Common myeloid progenitor, CD34-positive (primary cell): ENCODE measurements at regions of chr1 and their contacts with region 1.

Region 1: DNA sequence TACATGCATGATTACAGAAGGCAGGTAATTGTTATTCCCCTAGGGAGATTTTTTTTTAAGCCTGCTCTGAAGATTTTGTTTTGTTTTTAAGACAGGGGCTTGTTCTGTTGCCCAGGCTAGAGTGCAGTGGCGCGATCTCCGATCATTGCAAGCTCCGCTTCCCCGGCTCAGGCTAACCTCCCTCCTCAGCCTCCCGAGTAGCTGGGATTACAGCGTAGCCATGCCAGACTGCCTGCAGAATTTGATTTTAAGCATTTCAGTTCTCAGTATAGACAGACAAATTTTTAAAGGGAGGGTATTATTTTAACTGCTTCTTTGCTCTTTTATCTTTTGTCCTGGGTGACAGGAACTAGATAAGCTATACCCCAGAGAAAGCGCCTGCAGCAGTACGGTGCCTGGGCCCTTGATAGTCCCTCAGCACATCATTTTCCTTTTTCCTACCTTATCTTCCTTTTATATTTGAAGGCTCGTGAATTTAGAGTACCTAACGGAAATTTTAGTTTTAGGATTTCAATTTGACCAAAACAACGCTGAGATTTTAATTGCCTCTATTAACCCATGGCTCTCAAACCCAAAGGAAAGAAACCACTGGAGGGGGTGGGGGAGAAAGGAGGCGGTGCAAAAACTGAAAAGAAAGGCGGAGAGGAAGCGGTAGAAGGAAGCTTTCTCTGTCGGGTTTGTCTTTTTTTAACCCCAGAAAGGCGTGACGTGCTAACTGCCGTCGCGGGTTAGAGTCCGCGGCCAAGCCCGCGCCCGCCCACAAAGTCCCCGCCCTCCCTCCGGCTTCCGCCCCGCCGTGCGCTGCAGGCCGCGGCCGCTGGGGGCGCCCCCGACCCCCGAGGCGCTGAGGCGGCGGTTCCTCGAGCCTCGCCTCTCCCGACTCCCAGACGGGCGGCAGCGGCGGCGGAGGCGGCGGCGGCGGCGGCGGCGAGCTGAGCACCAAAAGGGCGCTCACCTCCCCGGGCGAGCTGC is at the start of gene EEIG2:
- DNase-seq: peak; percentile 91 to 95 (median 94)
- H3K4me3 ChIP-seq: peak within 1 kb of the TSS; percentile 79 to 91 (median 86)
- H3K27ac ChIP-seq: peak within 1 kb of the TSS; percentile 8 to 75
- H3K4me1 ChIP-seq: peaks cover 14 to 38% (median 29%) of the 10 kb centered on the region in 4 experiments
- H3K27me3 ChIP-seq: no peaks in the 10 kb centered on the region

Region 2: DNA sequence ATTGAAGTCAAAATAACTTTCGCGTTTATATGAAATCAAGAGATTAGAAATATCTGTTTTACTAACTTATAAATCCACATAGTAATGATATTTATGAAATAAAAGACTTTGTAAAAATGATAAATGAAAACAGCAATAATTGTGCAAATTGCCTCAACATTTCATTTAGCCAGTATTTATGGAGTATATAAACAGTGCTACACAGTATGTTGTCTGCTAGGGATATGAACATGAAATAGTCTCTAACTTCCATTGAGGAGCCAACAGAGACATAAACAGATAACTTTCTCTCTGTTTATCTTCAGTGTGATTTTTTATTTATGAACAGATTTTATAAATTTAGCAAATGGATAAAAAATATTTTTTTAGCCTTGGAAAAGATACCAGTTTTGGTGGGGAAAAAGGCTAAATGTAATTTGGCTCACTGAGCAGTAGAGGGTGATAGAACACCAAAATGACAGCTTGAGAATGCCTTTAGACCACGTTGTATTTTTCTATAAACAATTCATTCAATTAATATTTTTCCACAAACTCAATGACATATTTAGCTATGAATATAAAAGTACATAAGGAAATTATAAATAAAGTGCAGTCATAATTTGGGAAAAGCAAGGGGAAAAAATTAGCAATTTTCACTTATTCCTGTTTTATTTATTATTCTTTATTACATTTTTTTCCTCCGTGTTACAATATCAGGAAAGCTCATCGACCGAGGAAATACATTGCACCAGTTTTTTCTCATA is 47.1 kb before region 1 on chr1:
- CTCF ChIA-PET with region 1: interaction called, 63 read pairs
- POLR2A ChIA-PET with region 1: no interaction called
- DNase-seq: peak; percentile 51 to 74 (median 62)
- H3K4me3 ChIP-seq: no peak overlapping the region
- H3K27ac ChIP-seq: no peak overlapping the region
- H3K4me1 ChIP-seq: no peaks in the 10 kb centered on the region
- H3K27me3 ChIP-seq: peaks cover 0 to 10% (median 5%) of the 10 kb centered on the region in 5 experiments

Region 3: GRCh38 chr1:108531444-108531843 is 28.1 kb before region 1 on chr1:
- CTCF ChIA-PET with region 1: interaction called, 23 read pairs
- POLR2A ChIA-PET with region 1: interaction called, 9 read pairs
- DNase-seq: no peak
- H3K4me3 ChIP-seq: no peak overlapping the region
- H3K27ac ChIP-seq: no peak overlapping the region
- H3K4me1 ChIP-seq: peaks cover 0 to 6% (median 3%) of the 10 kb centered on the region in 4 experiments
- H3K27me3 ChIP-seq: no peaks in the 10 kb centered on the region

Region 4: DNA sequence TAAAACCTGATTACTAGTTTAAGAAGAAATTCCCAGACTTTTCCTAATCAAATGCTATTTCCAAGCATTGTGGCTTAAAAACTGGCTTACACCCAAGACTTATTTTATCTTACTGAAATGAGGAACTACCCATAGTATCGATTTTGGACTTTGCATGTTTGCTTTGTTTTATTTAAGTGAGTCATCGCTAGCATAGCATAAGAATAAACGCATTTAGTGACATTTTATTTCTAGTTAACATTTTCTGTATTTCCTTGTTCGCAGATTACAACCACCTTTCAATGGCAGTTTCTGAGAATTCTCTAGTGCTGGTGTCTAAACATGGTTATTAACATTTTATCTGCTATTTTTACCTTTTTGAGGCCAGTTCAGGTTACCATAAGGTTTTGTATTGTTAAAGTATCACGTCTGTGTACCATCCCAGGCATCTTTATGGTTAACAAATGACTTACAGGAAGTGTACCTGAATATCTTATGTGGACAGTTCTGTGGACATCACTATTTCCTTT is 24.9 kb after region 1 on chr1:
- CTCF ChIA-PET with region 1: interaction called, 16 read pairs
- POLR2A ChIA-PET with region 1: no interaction called
- DNase-seq: peak in 2 of 3 donors; percentile 45 to 71
- H3K4me3 ChIP-seq: peak overlapping the region in 1 of 7 experiments; percentile 24
- H3K27ac ChIP-seq: no peak overlapping the region
- H3K4me1 ChIP-seq: peaks cover 17 to 30% (median 18%) of the 10 kb centered on the region in 4 experiments
- H3K27me3 ChIP-seq: no peaks in the 10 kb centered on the region

Region 5: DNA sequence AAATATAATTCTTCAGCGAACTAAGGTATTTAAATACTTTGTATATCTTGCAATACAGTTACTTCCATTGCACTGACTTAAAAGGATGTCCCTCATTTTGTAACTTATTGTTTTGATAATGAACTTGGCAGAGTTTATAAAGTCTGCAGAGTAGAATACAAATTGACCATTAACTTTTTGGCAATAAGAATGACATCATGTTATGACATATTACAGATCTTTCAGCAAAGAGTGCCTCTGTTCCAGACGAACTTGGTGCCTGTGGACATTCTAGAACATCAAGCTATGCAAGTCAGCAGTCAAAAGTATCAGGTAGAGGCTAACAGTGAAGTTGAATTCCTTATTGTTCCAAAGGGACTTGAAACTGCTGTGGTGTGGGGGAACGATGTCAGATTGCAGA is 68.5 kb after region 1 on chr1:
- CTCF ChIA-PET with region 1: interaction called, 15 read pairs
- POLR2A ChIA-PET with region 1: no interaction called
- DNase-seq: no peak
- H3K4me3 ChIP-seq: no peak overlapping the region
- H3K27ac ChIP-seq: no peak overlapping the region
- H3K4me1 ChIP-seq: no peaks in the 10 kb centered on the region
- H3K27me3 ChIP-seq: no peaks in the 10 kb centered on the region

Region 6: GRCh38 chr1:108691942-108692723 is 132.6 kb after region 1 on chr1 and contains the start of gene PRPF38B:
- CTCF ChIA-PET with region 1: interaction called, 4 read pairs
- POLR2A ChIA-PET with region 1: interaction called, 10 read pairs
- DNase-seq: peak; percentile 94 to 98 (median 97)
- H3K4me3 ChIP-seq: peak within 1 kb of the TSS; percentile 76 to 99 (median 88)
- H3K27ac ChIP-seq: peak within 1 kb of the TSS; percentile 91 to 98
- H3K4me1 ChIP-seq: peaks cover 9 to 49% (median 33%) of the 10 kb centered on the region in 4 experiments
- H3K27me3 ChIP-seq: no peaks in the 10 kb centered on the region

Region 7: GRCh38 chr1:108758796-108759195 is 199.3 kb after region 1 on chr1:
- CTCF ChIA-PET with region 1: no interaction called
- POLR2A ChIA-PET with region 1: no interaction called
- DNase-seq: no peak
- H3K4me3 ChIP-seq: no peak overlapping the region
- H3K27ac ChIP-seq: no peak overlapping the region
- H3K4me1 ChIP-seq: no peaks in the 10 kb centered on the region
- H3K27me3 ChIP-seq: no peaks in the 10 kb centered on the region

Region 8: GRCh38 chr1:108816049-108816893 is 256.8 kb after region 1 on chr1:
- CTCF ChIA-PET with region 1: no interaction called
- POLR2A ChIA-PET with region 1: no interaction called
- DNase-seq: peak in 1 of 3 donors; percentile 19
- H3K4me3 ChIP-seq: peak overlapping the region in 1 of 7 experiments; percentile 7
- H3K27ac ChIP-seq: no peak overlapping the region
- H3K4me1 ChIP-seq: peaks cover 0 to 7% (median 4%) of the 10 kb centered on the region in 4 experiments
- H3K27me3 ChIP-seq: no peaks in the 10 kb centered on the region